AG04449 (cell line): ENCODE measurements at regions of chr19 and their contacts with region 1.

Region 1: DNA sequence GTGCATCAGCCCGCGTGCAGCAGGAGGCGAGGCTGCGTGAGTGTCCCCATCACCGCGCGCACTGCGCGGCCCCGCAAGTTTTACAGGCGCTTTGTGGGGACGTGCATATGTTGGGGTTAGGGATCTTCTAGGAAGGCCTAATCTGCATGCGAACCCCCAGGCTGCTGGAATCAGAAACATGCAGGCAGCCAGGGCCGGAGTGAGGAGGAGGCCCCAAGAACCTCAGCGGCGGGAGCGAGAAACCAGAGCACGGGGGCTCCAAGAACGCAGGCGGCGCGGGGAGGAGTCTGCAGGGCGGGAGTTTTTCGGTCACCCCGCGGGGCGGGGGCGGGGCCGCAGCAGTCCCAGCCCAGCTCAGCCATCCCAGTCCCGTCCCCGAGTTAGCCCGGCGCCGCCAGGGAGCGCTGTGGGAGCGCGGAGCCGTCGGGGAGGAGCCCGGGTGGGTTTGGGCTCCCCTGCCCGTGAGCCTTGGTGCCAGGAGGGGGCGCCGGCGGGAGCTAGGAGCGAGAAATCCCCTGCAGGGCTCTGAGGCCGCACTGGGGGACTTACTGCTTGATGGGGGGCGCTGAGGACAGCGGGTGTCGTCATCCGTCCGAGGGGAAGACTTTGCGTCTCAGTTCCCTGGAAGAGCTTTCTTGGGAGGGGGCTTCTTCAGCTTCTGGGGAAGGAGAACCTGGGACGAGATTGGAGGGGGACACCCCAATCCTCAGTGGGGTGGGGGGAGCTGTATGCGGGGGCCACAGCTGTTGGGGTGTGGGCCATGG is 933 bp upstream of the NRTN start:
- DNase-seq: peak; percentile 10
- H3K4me3 ChIP-seq: peak overlapping the region; percentile 49
- CTCF ChIP-seq: peak; percentile 100

Region 2: GRCh38 chr19:5547881-5548280 is 256.1 kb before region 1 on chr19:
- CTCF ChIA-PET with region 1: no interaction called
- POLR2A ChIA-PET with region 1: no interaction called
- DNase-seq: peak; percentile 5
- H3K4me3 ChIP-seq: no peak overlapping the region
- CTCF ChIP-seq: peak; percentile 66

Region 3: DNA sequence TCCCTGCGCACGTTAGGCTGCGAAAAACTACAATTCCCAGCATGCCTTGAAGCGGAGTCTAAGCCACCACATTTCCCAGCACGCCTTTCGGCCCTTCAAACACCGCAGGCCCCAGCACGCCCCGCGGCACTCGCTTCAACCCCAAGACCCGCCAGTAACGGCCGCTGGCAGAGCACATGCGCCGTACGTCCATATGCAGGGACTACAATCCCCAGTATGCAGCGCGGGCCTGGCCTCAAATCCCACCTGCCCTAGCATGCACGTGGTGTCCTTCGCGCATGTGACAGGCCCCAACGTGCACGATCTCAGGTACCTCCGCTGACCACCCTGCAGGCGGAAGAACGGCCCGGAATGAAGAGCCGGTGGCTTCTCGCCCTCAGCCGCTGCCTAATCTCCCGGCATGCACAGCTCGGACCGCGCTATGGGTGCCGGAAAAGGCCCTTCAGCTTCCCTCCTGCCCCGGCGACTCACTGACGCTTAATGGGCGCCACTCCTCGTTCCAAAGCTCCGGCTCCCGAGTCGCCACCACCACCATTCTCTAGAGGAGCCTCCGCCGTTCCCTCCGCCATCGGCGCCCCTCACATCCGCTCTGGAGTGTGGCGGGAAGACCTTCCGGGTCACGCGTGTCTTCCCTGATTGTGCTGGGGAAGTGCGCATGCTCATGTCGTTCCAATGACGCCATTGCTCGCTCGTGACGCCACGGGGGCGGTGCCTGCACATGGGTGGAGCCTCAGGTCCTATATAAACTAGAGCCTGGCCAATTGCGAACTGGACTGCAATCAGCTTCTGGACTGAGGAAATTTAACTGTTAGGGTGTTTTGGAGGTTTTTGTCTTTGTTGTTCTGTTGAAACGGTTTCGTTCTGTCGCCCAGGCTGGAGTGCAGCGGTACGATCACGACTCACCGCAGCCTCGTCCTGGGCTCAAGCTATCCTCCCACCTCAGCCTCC is 13.1 kb before region 1 on chr19 and contains the start of gene DUS3L:
- CTCF ChIA-PET with region 1: interaction called, 70 read pairs
- POLR2A ChIA-PET with region 1: no interaction called
- DNase-seq: peak; percentile 88
- H3K4me3 ChIP-seq: peak within 1 kb of the TSS; percentile 99
- CTCF ChIP-seq: no peak

Region 4: DNA sequence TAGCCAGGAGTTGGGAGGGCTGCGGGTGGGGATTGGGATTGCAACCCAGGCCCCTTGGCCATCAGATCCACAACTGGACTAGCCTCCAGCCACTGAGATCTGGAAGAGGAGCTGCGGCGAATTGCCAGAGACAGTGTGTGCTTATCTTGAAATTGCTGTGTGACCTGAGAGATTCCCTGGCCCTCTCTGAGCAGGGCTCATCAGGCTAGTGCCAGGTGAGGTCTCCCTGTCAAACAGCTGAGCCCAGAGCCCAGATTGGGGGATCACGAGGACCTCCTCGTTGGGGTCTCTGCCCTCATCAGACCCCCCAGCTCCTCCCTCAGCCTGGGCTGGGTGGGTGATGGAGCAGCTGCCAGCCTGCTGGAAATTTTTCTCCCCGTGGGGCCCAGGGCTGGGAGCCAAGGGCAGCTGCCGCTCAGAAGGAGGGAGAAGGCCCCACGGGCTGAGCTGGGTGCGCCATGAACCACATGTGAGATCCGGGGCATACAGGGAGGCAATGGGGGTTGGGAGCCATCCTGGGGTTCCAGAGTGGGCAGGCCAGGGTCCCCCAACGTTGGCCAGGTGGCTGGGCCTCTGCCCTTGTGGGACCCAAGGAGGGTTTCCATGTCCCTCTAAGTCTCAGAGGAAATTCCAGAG is 59.2 kb after region 1 on chr19:
- CTCF ChIA-PET with region 1: interaction called, 10 read pairs
- POLR2A ChIA-PET with region 1: no interaction called
- DNase-seq: no peak
- H3K4me3 ChIP-seq: no peak overlapping the region
- CTCF ChIP-seq: no peak

Region 5: DNA sequence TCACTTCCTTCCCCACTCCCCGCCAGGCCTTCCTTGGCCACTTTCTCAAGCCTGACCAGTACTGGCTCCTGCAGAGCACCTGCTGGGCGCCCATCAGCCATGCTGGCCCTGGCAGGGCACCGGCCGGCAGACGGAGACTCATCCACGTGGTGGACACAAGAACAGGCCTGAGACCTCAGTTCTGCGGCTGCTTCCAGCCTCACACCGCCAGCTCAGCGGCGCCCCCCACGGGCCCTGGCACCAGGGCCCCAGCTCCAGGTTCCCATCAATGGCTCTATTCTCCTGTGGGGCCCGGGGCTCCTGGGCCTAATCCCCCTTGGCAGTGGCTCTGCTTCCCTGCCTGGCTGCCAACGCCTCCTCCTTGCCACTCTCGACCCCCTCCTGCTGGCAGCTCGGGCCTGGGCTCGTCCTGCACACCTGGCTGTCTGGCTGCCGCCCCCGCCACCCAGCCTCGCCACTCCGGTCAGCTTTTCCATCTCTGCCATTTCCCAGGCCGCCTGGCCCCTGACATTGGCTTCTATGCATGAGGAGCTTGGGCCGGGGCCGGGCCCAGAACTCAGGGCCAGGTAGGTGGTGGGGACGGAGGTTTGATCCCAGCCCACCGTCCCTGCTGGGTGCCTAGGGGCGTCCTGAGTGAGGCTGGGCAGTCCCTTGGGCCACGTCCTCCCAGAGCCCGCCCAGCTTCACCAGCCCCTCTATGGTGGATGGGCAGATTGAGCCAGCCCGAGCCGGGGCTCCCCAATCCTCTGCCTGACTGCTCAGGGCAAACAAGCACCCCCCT is 93.4 kb after region 1 on chr19:
- CTCF ChIA-PET with region 1: interaction called, 100 read pairs
- POLR2A ChIA-PET with region 1: interaction called, 10 read pairs
- DNase-seq: no peak
- H3K4me3 ChIP-seq: no peak overlapping the region
- CTCF ChIP-seq: no peak

Region 6: DNA sequence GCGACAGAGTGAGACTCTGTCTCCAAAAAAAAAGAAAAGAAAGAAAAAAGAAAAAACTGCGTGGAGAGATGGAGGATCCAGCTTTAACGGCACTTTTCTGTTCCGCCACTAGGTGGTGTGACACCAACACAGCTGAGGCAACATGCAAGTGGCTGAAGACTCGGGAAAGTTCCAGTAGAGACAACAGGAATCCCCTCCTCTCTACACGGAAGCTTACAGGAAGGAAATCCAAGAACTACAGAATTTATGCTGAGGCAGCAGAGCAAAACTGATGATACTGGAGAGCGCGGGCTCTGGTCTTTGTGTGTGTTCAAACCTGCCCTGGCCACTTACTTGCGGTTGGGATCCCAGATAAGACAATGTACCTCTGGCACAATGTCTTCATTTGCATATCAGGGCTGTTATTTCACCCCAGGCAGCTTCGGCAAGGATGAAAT is 164.1 kb after region 1 on chr19:
- CTCF ChIA-PET with region 1: interaction called, 19 read pairs
- POLR2A ChIA-PET with region 1: no interaction called
- DNase-seq: no peak
- H3K4me3 ChIP-seq: no peak overlapping the region
- CTCF ChIP-seq: peak; percentile 85

Region 7: GRCh38 chr19:6048808-6049405 is 245.0 kb after region 1 on chr19:
- CTCF ChIA-PET with region 1: interaction called, 16 read pairs
- POLR2A ChIA-PET with region 1: no interaction called
- DNase-seq: no peak
- H3K4me3 ChIP-seq: no peak overlapping the region
- CTCF ChIP-seq: peak; percentile 86